ENCODE measurements at regions of chr17 and their contacts with region 1.

Region 1: GRCh38 chr17:75855310-75856081 is at the start of gene WBP2:
- DNase-seq: peak; percentile 100
- ATAC-seq: peak; percentile 93
- H3K4me3 Mint-ChIP-seq: no peak within 1 kb of the TSS
- H3K27ac Mint-ChIP-seq: peak within 1 kb of the TSS; percentile 92
- H3K4me1 Mint-ChIP-seq: peaks cover 33% of the 10 kb centered on the region
- H3K27me3 Mint-ChIP-seq: no peaks in the 10 kb centered on the region
- CTCF ChIP-seq: peak; percentile 53
- total RNA-seq, gene WBP2: 54.4 to 58.5 TPM

Region 2: GRCh38 chr17:75764711-75765421 is 90.6 kb before region 1 on chr17 and contains the start of gene GALK1:
- CTCF ChIA-PET with region 1: interaction called, 11 read pairs
- POLR2A ChIA-PET with region 1: no interaction called
- intact Hi-C with region 1: no loop called
- DNase-seq: peak; percentile 81
- ATAC-seq: peak; percentile 96
- H3K4me3 Mint-ChIP-seq: peak within 1 kb of the TSS; percentile 79
- H3K27ac Mint-ChIP-seq: peak within 1 kb of the TSS; percentile 78
- H3K4me1 Mint-ChIP-seq: peaks cover 10% of the 10 kb centered on the region
- H3K27me3 Mint-ChIP-seq: no peaks in the 10 kb centered on the region
- CTCF ChIP-seq: peak; percentile 78
- total RNA-seq, gene GALK1: 43.4 to 50.7 TPM

Region 3: DNA sequence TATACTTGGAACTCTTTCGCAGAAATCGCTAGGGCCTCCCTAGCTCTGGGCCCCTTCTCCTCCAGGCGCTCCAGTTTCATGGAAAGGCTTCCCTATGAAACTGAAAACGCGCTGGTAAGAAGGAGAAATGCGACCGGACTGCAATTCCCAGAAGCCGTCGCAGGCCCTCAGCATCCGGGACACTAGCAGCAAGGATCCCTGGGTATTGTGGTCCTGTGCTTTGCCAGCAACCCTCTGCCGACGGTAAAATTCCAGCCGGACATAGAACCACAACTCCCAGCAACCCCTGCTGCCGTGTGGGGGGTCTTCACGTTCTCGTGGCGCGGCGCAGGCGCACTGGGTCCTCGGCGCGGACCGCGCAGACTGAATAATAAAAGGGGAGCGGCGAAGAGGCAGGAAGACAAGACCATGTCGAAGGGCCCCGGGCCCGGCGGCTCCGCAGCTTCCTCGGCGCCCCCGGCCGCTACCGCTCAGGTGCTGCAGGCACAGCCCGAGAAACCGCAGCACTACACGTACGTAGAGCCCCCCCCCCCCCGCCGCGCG is 71.0 kb before region 1 on chr17 and contains the start of gene UNK:
- CTCF ChIA-PET with region 1: interaction called, 16 read pairs
- POLR2A ChIA-PET with region 1: interaction called, 10 read pairs
- intact Hi-C with region 1: no loop called
- DNase-seq: peak; percentile 98
- ATAC-seq: peak; percentile 71
- H3K4me3 Mint-ChIP-seq: peak within 1 kb of the TSS; percentile 93
- H3K27ac Mint-ChIP-seq: peak within 1 kb of the TSS; percentile 100
- H3K4me1 Mint-ChIP-seq: peaks cover 35% of the 10 kb centered on the region
- H3K27me3 Mint-ChIP-seq: peaks cover 2% of the 10 kb centered on the region
- CTCF ChIP-seq: no peak
- total RNA-seq, gene UNK: 26.4 to 26.6 TPM

Region 4: GRCh38 chr17:75845049-75845860 is 10.2 kb before region 1 on chr17:
- CTCF ChIA-PET with region 1: interaction called, 47 read pairs
- POLR2A ChIA-PET with region 1: interaction called, 39 read pairs
- intact Hi-C with region 1: no loop called
- DNase-seq: peak; percentile 83
- ATAC-seq: peak; percentile 72
- H3K4me3 Mint-ChIP-seq: peak overlapping the region; percentile 96
- H3K27ac Mint-ChIP-seq: peak overlapping the region; percentile 75
- H3K4me1 Mint-ChIP-seq: peaks cover 30% of the 10 kb centered on the region
- H3K27me3 Mint-ChIP-seq: no peaks in the 10 kb centered on the region
- CTCF ChIP-seq: peak; percentile 72

Region 5: GRCh38 chr17:75872434-75873351 is 17.2 kb after region 1 on chr17:
- CTCF ChIA-PET with region 1: interaction called, 107 read pairs
- POLR2A ChIA-PET with region 1: interaction called, 72 read pairs
- intact Hi-C with region 1: no loop called
- DNase-seq: peak; percentile 66
- ATAC-seq: peak; percentile 20
- H3K4me3 Mint-ChIP-seq: no peak overlapping the region
- H3K27ac Mint-ChIP-seq: peak overlapping the region; percentile 75
- H3K4me1 Mint-ChIP-seq: peaks cover 25% of the 10 kb centered on the region
- H3K27me3 Mint-ChIP-seq: no peaks in the 10 kb centered on the region
- CTCF ChIP-seq: no peak

Region 6: GRCh38 chr17:75896415-75897159 is 41.1 kb after region 1 on chr17 and contains the start of gene TRIM65:
- CTCF ChIA-PET with region 1: interaction called, 11 read pairs
- POLR2A ChIA-PET with region 1: interaction called, 15 read pairs
- intact Hi-C with region 1: no loop called
- DNase-seq: peak; percentile 85
- ATAC-seq: peak; percentile 88
- H3K4me3 Mint-ChIP-seq: peak within 1 kb of the TSS; percentile 87
- H3K27ac Mint-ChIP-seq: peak within 1 kb of the TSS; percentile 88
- H3K4me1 Mint-ChIP-seq: peaks cover 21% of the 10 kb centered on the region
- H3K27me3 Mint-ChIP-seq: no peaks in the 10 kb centered on the region
- CTCF ChIP-seq: peak; percentile 17
- total RNA-seq, gene TRIM65: 37.1 to 42.2 TPM

Measured in activated CD8-positive, alpha-beta T cell treated with anti-CD3 and anti-CD28 coated beads for 36 hours (primary cell).